Body of pancreas (tissue), 4 donors: ENCODE measurements at regions of chrX and their contacts with region 1.

Region 1: GRCh38 chrX:153032397-153033118 is 23.7 kb upstream of the PNMA3 start:
- DNase-seq: peak; percentile 66 to 75 (median 74)
- ATAC-seq: peak; percentile 93
- H3K4me3 ChIP-seq: no peak overlapping the region
- H3K27ac ChIP-seq: no peak overlapping the region
- H3K4me1 ChIP-seq: no peaks in the 10 kb centered on the region
- H3K27me3 ChIP-seq: no peaks in the 10 kb centered on the region
- CTCF ChIP-seq: peak; percentile 65 to 93 (median 85)
- POLR2A ChIP-seq: peak in 2 of 3 donors; percentile 23 to 28

Region 2: DNA sequence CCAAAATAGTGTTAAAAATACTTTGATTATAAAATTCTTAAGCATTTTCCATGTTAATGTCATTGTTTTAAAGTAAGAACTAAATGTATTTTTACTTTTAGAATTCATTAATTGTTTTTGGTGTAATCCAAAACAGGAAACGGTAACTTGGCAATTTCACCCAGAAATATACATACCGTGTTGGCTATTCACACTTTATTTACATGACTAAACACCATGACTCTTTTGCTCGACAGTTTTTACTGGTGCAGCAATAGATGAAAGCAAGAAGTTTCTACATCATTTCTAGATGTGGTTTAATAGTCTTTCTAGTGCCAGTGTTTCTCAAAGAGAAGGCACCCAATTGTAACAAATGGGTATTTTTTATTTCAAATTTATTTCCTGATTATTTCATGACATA is 121.0 kb after region 1 on chrX:
- intact Hi-C with region 1: no loop called
- DNase-seq: no peak
- ATAC-seq: no peak
- H3K4me3 ChIP-seq: no peak overlapping the region
- H3K27ac ChIP-seq: no peak overlapping the region
- H3K4me1 ChIP-seq: no peaks in the 10 kb centered on the region
- H3K27me3 ChIP-seq: no peaks in the 10 kb centered on the region
- CTCF ChIP-seq: no peak
- POLR2A ChIP-seq: no peak

Region 3: GRCh38 chrX:153488231-153488914 is 455.8 kb after region 1 on chrX:
- intact Hi-C with region 1: no loop called
- DNase-seq: peak in 1 of 4 donors; percentile 16
- ATAC-seq: no peak
- H3K4me3 ChIP-seq: no peak overlapping the region
- H3K27ac ChIP-seq: no peak overlapping the region
- H3K4me1 ChIP-seq: peaks cover 7% of the 10 kb centered on the region
- H3K27me3 ChIP-seq: no peaks in the 10 kb centered on the region
- CTCF ChIP-seq: no peak
- POLR2A ChIP-seq: no peak

Region 4: DNA sequence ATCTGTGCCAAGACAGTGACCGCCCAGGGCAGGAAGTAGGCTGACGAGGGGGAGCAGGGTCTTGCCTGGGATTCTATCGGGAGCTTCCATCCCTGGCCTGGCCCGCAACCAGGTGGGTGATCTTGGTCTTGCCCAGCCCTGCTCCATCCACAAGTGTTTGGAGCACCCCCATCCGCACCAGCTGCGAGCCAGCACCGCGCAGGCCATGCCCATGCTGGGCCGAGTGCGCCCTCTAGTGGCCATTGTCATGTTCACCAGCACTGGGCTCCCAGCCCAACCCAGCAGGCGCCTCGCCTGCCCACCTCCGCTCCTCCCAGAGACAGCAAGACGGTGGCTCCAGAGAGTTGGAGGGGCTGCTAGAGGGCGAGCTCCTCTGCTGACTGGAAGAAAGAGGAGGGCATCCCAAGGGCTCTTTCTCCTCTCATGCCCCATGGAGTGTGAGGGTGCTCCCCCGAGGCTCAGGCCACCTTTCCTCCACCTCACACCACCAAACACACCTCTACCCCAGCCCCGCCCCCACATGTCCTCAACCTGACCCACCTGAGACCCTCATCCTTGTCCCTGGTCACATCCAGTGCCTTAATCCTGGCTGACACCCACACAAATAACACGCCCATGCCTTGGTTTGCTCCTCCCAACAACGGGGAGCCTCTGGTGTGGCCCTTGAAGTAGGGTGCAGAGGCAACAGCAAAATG is 475.1 kb after region 1 on chrX:
- intact Hi-C with region 1: loop called (anchors 10 kb)
- DNase-seq: peak; percentile 78 to 84 (median 82)
- ATAC-seq: peak; percentile 91
- H3K4me3 ChIP-seq: no peak overlapping the region
- H3K27ac ChIP-seq: no peak overlapping the region
- H3K4me1 ChIP-seq: no peaks in the 10 kb centered on the region
- H3K27me3 ChIP-seq: no peaks in the 10 kb centered on the region
- CTCF ChIP-seq: peak; percentile 65 to 92 (median 80)
- POLR2A ChIP-seq: no peak